RWPE1 (cell line): ENCODE measurements at regions of chr6 and their contacts with region 1.

Region 1: GRCh38 chr6:41578217-41579087 is 32.3 kb downstream of the FOXP4 start:
- DNase-seq: no peak
- H3K27ac ChIP-seq: peak overlapping the region; percentile 79
- CTCF ChIP-seq: no peak

Region 2: DNA sequence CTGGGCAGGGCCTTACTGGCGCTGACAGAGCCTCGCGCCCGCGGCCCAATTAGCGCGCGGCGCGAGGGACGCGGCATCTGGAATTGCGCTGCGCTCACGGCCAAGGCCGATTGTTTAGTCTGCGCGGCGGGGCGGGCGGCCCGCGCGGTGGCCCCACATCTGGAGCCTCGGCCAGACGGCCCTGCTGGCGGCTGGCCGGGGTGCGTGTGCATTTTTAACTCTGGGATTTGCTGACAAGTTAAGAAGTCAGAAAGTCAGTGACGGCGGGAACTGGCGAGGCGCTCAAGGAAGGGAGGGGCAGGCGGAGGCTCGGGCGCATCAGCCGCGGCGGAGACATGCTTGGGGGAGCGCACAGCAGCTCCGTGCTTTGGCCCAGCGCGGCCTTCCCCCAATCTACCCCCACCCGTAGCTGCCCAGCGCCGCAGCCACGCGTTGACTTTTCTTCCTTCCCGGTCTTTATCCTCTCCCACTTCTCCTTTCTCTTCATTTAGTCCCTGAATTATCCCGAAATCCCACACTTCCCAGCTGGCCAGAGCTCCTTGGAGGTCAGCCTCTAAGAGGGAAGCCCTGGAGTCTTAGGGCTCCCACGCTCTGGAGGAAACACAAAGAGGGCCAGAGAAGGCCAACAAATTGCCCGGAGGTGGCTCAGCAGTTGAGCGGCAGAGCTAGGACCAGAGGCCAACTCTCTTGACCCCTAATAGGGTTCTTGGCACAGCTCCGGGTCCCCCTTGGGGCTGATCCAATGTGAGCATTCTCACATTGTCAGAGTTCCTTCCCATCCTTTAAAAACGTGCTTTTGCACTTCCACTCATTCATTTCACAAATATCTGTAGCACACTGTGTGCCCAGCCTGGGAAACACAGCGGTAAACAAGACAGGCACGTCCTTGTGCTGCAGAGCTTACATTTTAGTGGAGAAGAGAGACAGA is 73.1 kb before region 1 on chr6:
- CTCF ChIA-PET with region 1: interaction called, 10 read pairs
- POLR2A ChIA-PET with region 1: no interaction called
- DNase-seq: peak; percentile 15
- H3K27ac ChIP-seq: no peak overlapping the region
- CTCF ChIP-seq: no peak